CD14-positive monocyte (primary cell): ENCODE measurements at regions of chr11 and their contacts with region 1.

Region 1: GRCh38 chr11:95835768-95836488 is 45.6 kb downstream of the CEP57 start:
- DNase-seq: peak; percentile 23 to 55 (median 50)
- H3K4me3 ChIP-seq: no peak overlapping the region
- H3K4me3 Mint-ChIP-seq: no peak overlapping the region
- H3K27ac ChIP-seq: no peak overlapping the region
- H3K27ac Mint-ChIP-seq: no peak overlapping the region
- H3K4me1 ChIP-seq: no peaks in the 10 kb centered on the region
- H3K4me1 Mint-ChIP-seq: no peaks in the 10 kb centered on the region
- H3K27me3 ChIP-seq: no peaks in the 10 kb centered on the region
- H3K27me3 Mint-ChIP-seq: no peaks in the 10 kb centered on the region
- CTCF ChIP-seq: peak; percentile 92

Region 2: DNA sequence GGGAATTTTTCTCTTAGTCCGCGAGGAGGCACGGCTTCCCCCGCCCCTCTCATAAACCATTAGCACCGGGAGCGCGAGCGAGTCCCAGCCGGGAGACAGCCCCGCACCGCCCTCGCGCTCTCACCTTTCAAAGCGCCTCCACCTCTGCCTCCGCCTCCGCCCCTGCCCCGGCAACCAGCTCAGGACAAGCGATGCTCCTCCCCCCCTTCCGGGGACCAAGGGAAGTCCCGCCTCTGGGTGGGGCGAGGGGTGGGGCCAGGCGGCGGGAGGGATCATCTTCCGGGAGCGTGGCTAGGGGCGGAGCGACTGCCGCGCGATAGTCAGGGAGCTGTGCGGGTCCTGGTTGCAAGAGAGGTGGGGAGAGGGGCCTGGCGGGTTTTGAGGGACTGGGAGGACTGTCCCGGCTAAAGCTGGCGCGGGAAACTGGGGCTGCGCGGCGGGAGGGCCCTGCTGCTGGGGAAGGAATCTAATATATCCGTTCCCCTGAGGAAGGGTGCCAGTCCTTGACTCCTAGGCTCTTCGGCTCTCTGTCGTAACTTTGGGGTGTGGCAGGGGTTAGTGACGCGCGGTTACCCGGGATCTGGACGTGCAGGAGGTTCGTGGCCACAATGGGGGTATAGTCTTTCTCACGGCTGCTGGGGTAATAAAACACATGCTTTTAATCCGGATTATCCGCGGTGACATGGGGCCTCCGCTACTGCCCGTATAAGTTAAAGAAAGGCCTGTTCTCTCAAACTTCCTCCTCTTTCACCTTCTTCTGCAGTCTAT is 554.0 kb after region 1 on chr11 and contains the starts of genes CCDC82 and JRKL:
- intact Hi-C with region 1: loop called (anchors 10 kb)
- DNase-seq: peak; percentile 88 to 91 (median 91)
- H3K4me3 ChIP-seq: peak within 1 kb of the TSS; percentile 52 to 93 (median 92)
- H3K4me3 Mint-ChIP-seq: peak within 1 kb of the TSS; percentile 95 to 97
- H3K27ac ChIP-seq: peak within 1 kb of the TSS; percentile 83 to 93
- H3K27ac Mint-ChIP-seq: peak within 1 kb of the TSS; percentile 94 to 99 (median 97)
- H3K4me1 ChIP-seq: peaks cover 15 to 24% of the 10 kb centered on the region in 2 donors
- H3K4me1 Mint-ChIP-seq: peaks cover 30% of the 10 kb centered on the region
- H3K27me3 ChIP-seq: no peaks in the 10 kb centered on the region
- H3K27me3 Mint-ChIP-seq: no peaks in the 10 kb centered on the region
- CTCF ChIP-seq: no peak
- polyA plus RNA-seq, gene CCDC82: 10.7 to 18.2 (median 12.2) TPM
- polyA plus RNA-seq, gene JRKL: 1.3 to 2.0 (median 1.9) TPM

Region 3: GRCh38 chr11:96424693-96425092 is 588.8 kb after region 1 on chr11:
- intact Hi-C with region 1: loop called (anchors 10 kb)
- DNase-seq: no peak
- H3K4me3 ChIP-seq: no peak overlapping the region
- H3K4me3 Mint-ChIP-seq: no peak overlapping the region
- H3K27ac ChIP-seq: no peak overlapping the region
- H3K27ac Mint-ChIP-seq: no peak overlapping the region
- H3K4me1 ChIP-seq: no peaks in the 10 kb centered on the region
- H3K4me1 Mint-ChIP-seq: peaks cover 3% of the 10 kb centered on the region
- H3K27me3 ChIP-seq: no peaks in the 10 kb centered on the region
- H3K27me3 Mint-ChIP-seq: peaks cover 4 to 6% (median 6%) of the 10 kb centered on the region in 3 donors
- CTCF ChIP-seq: no peak